Adrenal gland (tissue), 19 donors: ENCODE measurements at regions of chr3 and their contacts with region 1.

Region 1: DNA sequence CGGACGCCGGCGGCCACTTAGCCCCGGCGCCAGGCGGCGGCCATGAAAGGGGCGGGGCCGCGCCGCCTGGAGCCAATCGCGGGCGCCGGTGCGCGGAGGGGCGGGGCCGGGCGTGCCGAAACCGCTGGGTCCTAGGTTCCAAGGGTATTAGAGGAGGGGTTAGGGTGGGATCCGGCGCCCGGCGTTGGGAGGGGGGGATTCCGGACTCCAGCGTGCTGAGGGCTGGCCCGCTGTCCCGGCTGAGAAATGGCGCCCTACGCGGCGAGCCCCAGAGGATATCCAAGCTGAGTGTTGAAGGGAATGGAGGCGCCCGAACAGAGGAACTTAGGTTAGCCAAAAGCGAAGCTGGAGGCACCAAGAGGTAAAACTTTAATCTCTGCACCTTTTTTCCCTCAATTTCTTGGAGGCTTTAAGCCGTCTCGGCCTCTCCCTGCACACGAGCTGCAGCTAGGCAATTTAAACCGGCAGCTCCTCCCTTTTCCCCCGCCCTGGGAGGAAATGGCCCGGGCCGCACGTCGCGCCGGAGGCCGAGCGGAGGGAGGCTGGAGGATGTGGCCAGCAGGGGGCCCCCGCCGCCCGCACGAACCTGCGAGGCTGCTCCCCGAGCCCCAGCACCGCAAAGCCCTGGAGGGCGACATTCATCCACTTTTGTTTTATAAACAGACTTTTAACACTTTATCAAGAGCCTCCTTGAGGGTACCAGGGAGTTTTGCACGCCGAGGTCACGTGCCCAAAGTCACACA is at the start of gene XXYLT1:
- DNase-seq: peak; percentile 84 to 93 (median 89)
- H3K4me3 ChIP-seq: peak within 1 kb of the TSS; percentile 57 to 81 (median 68)
- H3K27ac ChIP-seq: peak within 1 kb of the TSS; percentile 50 to 87 (median 71)
- H3K4me1 ChIP-seq: peaks cover 9 to 22% of the 10 kb centered on the region in 2 donors
- H3K27me3 ChIP-seq: no peaks in the 10 kb centered on the region
- CTCF ChIP-seq: peak; percentile 88 to 97 (median 93)
- POLR2A ChIP-seq: peak in 1 of 2 donors; percentile 24
- total RNA-seq, gene XXYLT1: 8.2 to 14.6 (median 10.2) TPM

Region 2: GRCh38 chr3:195522254-195523023 is 251.2 kb after region 1 on chr3:
- intact Hi-C with region 1: loop called (anchors 2 kb)
- DNase-seq: no peak
- H3K4me3 ChIP-seq: no peak overlapping the region
- H3K27ac ChIP-seq: no peak overlapping the region
- H3K4me1 ChIP-seq: no peaks in the 10 kb centered on the region
- H3K27me3 ChIP-seq: no peaks in the 10 kb centered on the region
- CTCF ChIP-seq: peak; percentile 67 to 88 (median 80)
- POLR2A ChIP-seq: no peak